Naive thymus-derived CD4-positive, alpha-beta T cell (primary cell): ENCODE measurements at regions of chr5 and their contacts with region 1.

Region 1: GRCh38 chr5:65481635-65482295 is at the start of gene ADAMTS6:
- DNase-seq: peak; percentile 39 to 84 (median 72)
- ATAC-seq: peak; percentile 90
- H3K4me3 ChIP-seq: peak within 1 kb of the TSS; percentile 70
- H3K4me3 Mint-ChIP-seq: peak within 1 kb of the TSS in 2 of 10 donors; percentile 94
- H3K27ac ChIP-seq: peak within 1 kb of the TSS; percentile 73
- H3K27ac Mint-ChIP-seq: peak within 1 kb of the TSS in 8 of 9 donors; percentile 85 to 98 (median 92)
- H3K4me1 ChIP-seq: peaks cover 3 to 5% of the 10 kb centered on the region in 2 donors
- H3K4me1 Mint-ChIP-seq: peaks cover 5 to 20% (median 8%) of the 10 kb centered on the region in 7 donors
- H3K27me3 ChIP-seq: no peaks in the 10 kb centered on the region
- H3K27me3 Mint-ChIP-seq: peaks cover 0 to 7% (median 0%) of the 10 kb centered on the region in 5 donors
- total RNA-seq, gene ADAMTS6: 0.63 to 4.5 (median 2.6) TPM

Region 2: GRCh38 chr5:64768358-64769312 is 713.1 kb before region 1 on chr5 and contains the starts of genes CWC27 and SREK1IP1:
- CTCF ChIA-PET with region 1: interaction called, 5 read pairs
- POLR2A ChIA-PET with region 1: interaction called, 3 read pairs
- intact Hi-C with region 1: loop called (anchors 1 kb)
- DNase-seq: peak; percentile 65 to 88 (median 83)
- ATAC-seq: peak; percentile 98
- H3K4me3 ChIP-seq: peak within 1 kb of the TSS; percentile 90
- H3K4me3 Mint-ChIP-seq: peak within 1 kb of the TSS; percentile 94 to 100 (median 99)
- H3K27ac ChIP-seq: peak within 1 kb of the TSS; percentile 88
- H3K27ac Mint-ChIP-seq: peak within 1 kb of the TSS; percentile 96 to 100 (median 98)
- H3K4me1 ChIP-seq: peaks cover 21 to 37% of the 10 kb centered on the region in 2 donors
- H3K4me1 Mint-ChIP-seq: peaks cover 34 to 80% (median 77%) of the 10 kb centered on the region in 7 donors
- H3K27me3 ChIP-seq: no peaks in the 10 kb centered on the region
- H3K27me3 Mint-ChIP-seq: no peaks in the 10 kb centered on the region
- total RNA-seq, gene CWC27: 17.8 to 27.4 (median 21.0) TPM
- total RNA-seq, gene SREK1IP1: 11.7 to 29.9 (median 21.7) TPM

Region 3: DNA sequence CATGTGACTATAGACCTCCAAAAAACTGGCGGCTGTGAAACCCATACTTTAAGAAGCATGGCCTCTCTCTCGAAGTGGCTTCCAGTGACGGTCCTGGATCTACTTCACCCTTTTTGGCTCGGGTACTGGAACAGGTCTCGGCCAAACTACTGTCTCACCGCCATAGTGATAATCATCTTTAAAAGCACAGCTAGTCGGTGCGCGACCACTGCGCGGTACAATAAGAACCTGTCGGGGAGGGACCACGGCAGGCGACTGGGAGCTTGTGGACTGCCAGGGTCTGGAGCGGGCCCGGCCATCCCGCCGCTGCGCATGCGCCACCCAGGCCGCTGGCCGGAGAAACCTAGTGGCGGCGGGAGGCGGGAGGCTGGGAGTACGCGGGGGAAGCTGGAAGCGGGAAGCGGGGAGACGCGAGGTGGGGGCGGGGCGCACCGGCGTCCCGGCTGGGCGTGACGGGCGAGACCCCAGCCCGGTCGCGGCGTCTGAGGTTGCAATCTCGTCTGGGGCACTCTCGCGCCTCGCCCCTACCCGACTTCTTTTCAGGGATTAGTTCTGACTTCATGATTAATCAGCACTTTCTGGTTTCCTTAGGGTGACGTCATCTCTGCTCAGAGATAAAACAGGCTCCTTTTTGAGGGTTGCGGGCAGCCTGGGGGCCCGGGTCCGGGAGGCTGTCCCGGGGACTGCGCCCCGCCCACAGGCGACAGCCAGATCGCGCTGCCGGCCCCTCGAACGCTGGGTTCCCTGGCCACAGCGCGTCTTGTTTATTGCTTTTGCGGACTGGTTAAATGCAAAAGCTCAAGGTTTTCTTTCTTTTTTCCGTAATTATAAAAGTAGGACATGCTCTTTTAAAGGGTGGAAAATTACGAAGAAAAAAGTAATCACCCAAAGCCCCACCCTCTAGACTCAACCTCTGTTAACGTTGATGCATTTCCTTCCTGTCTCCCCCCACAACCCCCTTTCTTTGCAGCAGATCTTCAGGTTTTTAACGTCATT is 446.3 kb before region 1 on chr5:
- CTCF ChIA-PET with region 1: no interaction called
- POLR2A ChIA-PET with region 1: no interaction called
- intact Hi-C with region 1: loop called (anchors 1 kb)
- DNase-seq: peak; percentile 60 to 92 (median 85)
- ATAC-seq: peak; percentile 88
- H3K4me3 ChIP-seq: peak overlapping the region; percentile 78
- H3K4me3 Mint-ChIP-seq: peak overlapping the region; percentile 74 to 94 (median 82)
- H3K27ac ChIP-seq: peak overlapping the region; percentile 84
- H3K27ac Mint-ChIP-seq: peak overlapping the region; percentile 84 to 96 (median 90)
- H3K4me1 ChIP-seq: peaks cover 20% of the 10 kb centered on the region in 2 donors
- H3K4me1 Mint-ChIP-seq: peaks cover 3 to 36% (median 29%) of the 10 kb centered on the region in 7 donors
- H3K27me3 ChIP-seq: no peaks in the 10 kb centered on the region
- H3K27me3 Mint-ChIP-seq: no peaks in the 10 kb centered on the region

Region 4: GRCh38 chr5:65213921-65214525 is 267.7 kb before region 1 on chr5:
- CTCF ChIA-PET with region 1: no interaction called
- POLR2A ChIA-PET with region 1: no interaction called
- intact Hi-C with region 1: loop called in 1 of 2 experiments (anchors 1 kb)
- DNase-seq: no peak
- ATAC-seq: no peak
- H3K4me3 ChIP-seq: no peak overlapping the region
- H3K4me3 Mint-ChIP-seq: no peak overlapping the region
- H3K27ac ChIP-seq: no peak overlapping the region
- H3K27ac Mint-ChIP-seq: no peak overlapping the region
- H3K4me1 ChIP-seq: no peaks in the 10 kb centered on the region
- H3K4me1 Mint-ChIP-seq: no peaks in the 10 kb centered on the region
- H3K27me3 ChIP-seq: no peaks in the 10 kb centered on the region
- H3K27me3 Mint-ChIP-seq: peaks cover 0 to 5% (median 0%) of the 10 kb centered on the region in 5 donors

Region 5: DNA sequence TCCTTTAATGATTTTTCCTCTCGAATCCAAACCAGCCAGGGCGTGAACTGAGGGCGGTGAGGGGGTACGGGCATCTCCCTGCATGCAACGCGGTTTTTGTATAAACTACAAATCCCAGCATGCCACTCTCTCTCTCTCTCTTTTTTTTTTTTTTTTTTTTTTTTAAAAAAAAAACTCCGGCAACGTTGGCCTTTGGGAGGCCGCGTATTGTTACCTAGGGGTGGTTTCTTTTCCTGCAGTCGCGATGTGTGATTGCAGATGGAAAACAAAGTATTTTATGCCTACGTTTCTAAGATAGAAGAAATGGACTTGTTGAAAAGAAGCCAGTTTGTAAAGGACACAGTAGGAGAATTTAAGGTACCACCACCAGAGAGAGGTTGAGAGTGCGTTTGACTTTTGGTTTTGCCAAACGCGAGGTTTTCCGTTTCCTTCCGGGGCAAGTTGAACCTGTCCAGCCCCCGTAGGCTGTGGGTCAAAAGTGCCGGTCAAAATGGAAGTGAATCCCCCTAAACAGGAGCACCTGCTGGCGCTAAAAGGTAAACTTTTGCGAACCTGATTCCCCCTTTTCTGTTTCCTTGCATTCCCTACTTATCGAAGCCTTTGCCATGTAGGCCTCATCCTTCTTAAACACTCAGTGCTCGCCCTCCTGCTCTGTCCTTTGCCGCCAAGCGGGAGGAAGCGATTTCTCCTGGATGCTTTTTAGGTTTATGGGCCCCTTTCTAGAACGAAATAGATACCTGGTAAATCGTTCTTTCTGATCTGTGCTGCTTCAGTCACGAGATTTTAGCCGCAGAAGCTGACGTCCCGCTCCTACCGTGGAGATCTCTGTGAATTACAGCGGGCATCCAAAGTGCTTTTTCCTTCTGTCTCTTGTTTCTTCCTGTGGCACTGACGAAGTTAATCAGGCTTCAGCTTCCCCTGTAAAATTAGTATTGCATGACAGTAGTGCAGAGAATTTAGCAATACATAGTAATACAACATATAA is 143.1 kb after region 1 on chr5 and contains the starts of genes SHLD3 and TRAPPC13:
- CTCF ChIA-PET with region 1: no interaction called
- POLR2A ChIA-PET with region 1: no interaction called
- intact Hi-C with region 1: loop called in 1 of 2 experiments (anchors 2 kb)
- DNase-seq: peak; percentile 57 to 92 (median 91)
- ATAC-seq: peak; percentile 86
- H3K4me3 ChIP-seq: peak within 1 kb of the TSS; percentile 75
- H3K4me3 Mint-ChIP-seq: peak within 1 kb of the TSS; percentile 93 to 100 (median 98)
- H3K27ac ChIP-seq: peak within 1 kb of the TSS; percentile 92
- H3K27ac Mint-ChIP-seq: peak within 1 kb of the TSS; percentile 97 to 100 (median 98)
- H3K4me1 ChIP-seq: peaks cover 20% of the 10 kb centered on the region in 2 donors
- H3K4me1 Mint-ChIP-seq: peaks cover 14 to 73% (median 51%) of the 10 kb centered on the region in 7 donors
- H3K27me3 ChIP-seq: no peaks in the 10 kb centered on the region
- H3K27me3 Mint-ChIP-seq: peaks cover 0 to 3% (median 0%) of the 10 kb centered on the region in 5 donors
- total RNA-seq, gene SHLD3: 4.8 to 11.3 (median 5.8) TPM
- total RNA-seq, gene TRAPPC13: 18.2 to 23.1 (median 20.8) TPM

Region 6: DNA sequence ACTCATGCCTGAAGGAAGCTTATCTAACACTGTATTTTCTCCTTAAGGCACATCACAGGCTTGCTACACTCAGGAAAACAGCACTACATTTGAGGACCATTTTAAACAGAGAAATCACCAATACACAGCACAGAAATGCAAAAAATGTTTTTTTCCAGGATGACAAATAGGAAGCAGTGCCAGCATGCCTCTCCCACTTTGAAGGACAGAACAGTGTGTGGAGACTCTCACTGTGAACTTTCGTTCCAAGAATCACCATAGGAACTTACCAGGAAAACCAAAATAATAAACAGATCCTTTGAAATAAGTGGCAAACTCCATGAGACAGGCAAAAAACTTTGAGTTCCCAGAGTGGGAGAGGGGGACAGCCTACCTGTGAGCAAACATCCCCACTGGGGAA is 896.6 kb after region 1 on chr5:
- CTCF ChIA-PET with region 1: no interaction called
- POLR2A ChIA-PET with region 1: no interaction called
- intact Hi-C with region 1: no loop called
- DNase-seq: no peak
- ATAC-seq: no peak
- H3K4me3 ChIP-seq: no peak overlapping the region
- H3K4me3 Mint-ChIP-seq: no peak overlapping the region
- H3K27ac ChIP-seq: no peak overlapping the region
- H3K27ac Mint-ChIP-seq: no peak overlapping the region
- H3K4me1 ChIP-seq: no peaks in the 10 kb centered on the region
- H3K4me1 Mint-ChIP-seq: no peaks in the 10 kb centered on the region
- H3K27me3 ChIP-seq: peaks cover 0 to 3% of the 10 kb centered on the region in 2 donors
- H3K27me3 Mint-ChIP-seq: peaks cover 9 to 34% (median 19%) of the 10 kb centered on the region in 5 donors